ENCODE measurements at regions of chr1 and their contacts with region 1.

Region 1: DNA sequence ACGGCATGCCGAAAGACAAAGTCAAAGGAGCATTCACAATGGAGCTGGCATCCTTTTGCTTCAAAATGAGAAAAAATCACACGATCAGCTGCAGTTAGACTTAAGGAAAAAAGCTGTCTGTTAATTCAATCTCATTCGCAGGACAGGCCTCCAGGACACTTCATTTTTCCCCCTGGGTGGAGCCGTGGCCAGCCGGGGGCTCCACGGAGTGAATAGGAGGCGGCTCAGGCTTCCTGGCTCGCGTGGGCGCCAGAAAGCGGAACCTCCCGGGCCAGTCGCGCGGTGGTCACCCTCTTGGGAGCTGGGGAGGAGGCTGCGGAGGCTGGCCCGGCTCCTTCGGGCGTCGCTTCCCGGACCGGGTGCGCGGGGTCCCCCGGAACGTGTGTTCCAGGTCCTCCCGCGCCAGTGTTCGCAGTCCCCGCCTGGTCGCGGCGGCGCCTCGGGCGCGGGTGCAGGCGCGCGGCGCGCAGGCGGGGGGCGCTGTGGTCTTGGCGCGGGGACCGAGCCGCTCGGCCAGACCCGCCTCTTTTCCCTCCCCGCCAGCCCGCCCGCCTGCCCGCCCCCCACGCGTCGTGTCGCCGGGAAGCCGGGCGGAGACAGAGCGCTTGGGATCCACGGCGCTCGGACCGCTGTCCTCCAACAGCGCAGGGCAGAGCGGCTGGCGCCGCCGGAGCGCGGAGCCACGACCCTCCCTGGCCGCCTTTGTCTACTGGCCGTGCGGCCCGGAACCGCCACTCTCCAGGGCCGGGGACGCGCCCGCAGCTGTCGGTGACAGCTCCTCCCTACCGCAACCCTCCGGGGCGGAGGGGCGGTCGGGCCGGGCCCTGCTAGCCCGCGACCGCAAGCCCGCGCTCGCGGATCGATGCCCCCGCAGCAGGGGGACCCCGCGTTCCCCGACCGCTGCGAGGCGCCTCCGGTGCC is at the start of gene RHOU:
- DNase-seq: peak; percentile 80 to 89 (median 82)
- H3K4me3 ChIP-seq: peak within 1 kb of the TSS; percentile 82
- H3K27ac ChIP-seq: peak within 1 kb of the TSS; percentile 68 to 82
- H3K4me1 ChIP-seq: peaks cover 2% of the 10 kb centered on the region
- H3K27me3 ChIP-seq: no peaks in the 10 kb centered on the region
- CTCF ChIP-seq: peak; percentile 54 to 98 (median 98)
- EP300 ChIP-seq: no peak
- POLR2A ChIP-seq: peak; percentile 55
- total RNA-seq, gene RHOU: 20.5 to 131 (median 53.8) TPM

Region 2: DNA sequence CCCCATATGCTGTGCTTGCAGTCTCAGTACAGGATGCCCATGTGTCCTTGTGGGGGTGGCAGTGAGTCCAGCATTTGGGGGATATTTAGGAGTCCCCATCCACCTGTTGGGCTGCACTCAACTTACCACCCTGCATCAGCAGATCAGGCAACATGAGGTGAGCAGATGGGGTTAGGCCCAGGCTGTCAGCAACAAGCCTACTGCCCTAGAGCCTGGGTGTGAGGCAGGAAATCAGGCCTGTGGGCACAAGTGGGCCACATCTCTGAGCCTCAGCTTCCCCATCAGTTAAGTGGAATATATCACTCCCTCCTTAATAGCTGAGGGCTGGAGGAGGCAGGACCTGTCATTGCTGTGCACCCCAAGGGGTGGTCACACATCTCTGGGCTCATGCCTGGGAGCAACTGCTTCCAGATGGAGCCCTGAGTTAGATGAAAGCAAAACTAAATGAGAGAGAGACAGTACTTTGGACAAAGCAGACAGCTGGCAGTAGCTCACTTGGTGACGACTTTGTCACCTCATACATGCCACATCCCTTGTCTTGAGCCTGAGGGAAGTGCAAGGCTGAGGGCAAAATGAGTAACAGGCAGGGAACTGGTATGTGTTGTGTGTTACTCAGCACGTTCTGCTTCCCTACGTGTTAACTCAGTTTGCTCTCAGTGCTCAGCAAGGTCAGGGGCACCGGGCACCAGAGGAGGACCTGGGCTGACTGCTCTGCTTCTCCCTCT is 376.9 kb before region 1 on chr1:
- intact Hi-C with region 1: no loop called
- DNase-seq: no peak
- H3K4me3 ChIP-seq: no peak overlapping the region
- H3K27ac ChIP-seq: no peak overlapping the region
- H3K4me1 ChIP-seq: no peaks in the 10 kb centered on the region
- H3K27me3 ChIP-seq: no peaks in the 10 kb centered on the region
- CTCF ChIP-seq: no peak
- EP300 ChIP-seq: no peak
- POLR2A ChIP-seq: no peak

Region 3: DNA sequence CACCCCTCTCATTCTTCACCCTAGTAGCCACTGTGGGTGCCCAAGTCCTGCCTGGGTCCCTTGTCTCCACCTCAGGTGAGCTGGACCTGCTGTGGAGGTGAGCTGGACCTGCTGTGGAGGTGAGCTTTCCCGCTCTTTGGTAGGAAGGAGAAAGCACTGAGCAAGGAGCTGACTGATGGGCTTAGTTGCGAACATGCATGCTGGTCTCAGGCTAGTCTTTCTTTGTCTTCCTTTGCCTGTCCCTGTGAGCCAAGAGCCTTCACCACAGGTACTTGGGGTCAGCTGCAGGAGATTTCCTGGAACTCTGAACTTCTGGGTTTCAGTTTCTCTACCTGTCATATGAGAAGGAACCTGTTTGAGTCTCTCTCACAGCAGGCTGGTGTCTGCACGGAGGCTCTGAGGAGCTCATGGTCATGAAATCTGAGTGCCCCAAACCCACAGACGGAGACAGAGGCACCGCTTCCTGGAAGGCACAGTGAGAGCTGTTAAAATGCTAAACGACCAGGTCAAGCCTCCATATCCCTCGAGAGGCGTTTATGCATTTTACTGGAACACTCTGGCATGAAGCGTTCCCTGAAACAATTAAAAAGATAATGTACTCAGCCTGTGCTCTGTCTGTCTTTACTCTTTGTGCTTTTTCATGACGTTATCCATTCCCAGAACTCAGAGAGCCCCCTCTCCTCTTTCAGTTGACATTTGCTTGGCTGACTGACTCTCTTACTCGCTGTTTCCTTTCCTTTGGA is 69.7 kb after region 1 on chr1:
- intact Hi-C with region 1: loop called in 2 of 4 experiments (anchors 5 kb)
- DNase-seq: peak in 1 of 5 donors; percentile 52
- H3K4me3 ChIP-seq: no peak overlapping the region
- H3K27ac ChIP-seq: no peak overlapping the region
- H3K4me1 ChIP-seq: peaks cover 8% of the 10 kb centered on the region
- H3K27me3 ChIP-seq: no peaks in the 10 kb centered on the region
- CTCF ChIP-seq: no peak
- EP300 ChIP-seq: no peak
- POLR2A ChIP-seq: no peak

Region 4: GRCh38 chr1:228902781-228903433 is 167.8 kb after region 1 on chr1:
- intact Hi-C with region 1: loop called in 1 of 4 experiments (anchors 10 kb)
- DNase-seq: peak; percentile 88 to 93 (median 89)
- H3K4me3 ChIP-seq: no peak overlapping the region
- H3K27ac ChIP-seq: peak overlapping the region; percentile 28 to 65
- H3K4me1 ChIP-seq: peaks cover 15% of the 10 kb centered on the region
- H3K27me3 ChIP-seq: no peaks in the 10 kb centered on the region
- CTCF ChIP-seq: no peak
- EP300 ChIP-seq: no peak
- POLR2A ChIP-seq: no peak

Region 5: DNA sequence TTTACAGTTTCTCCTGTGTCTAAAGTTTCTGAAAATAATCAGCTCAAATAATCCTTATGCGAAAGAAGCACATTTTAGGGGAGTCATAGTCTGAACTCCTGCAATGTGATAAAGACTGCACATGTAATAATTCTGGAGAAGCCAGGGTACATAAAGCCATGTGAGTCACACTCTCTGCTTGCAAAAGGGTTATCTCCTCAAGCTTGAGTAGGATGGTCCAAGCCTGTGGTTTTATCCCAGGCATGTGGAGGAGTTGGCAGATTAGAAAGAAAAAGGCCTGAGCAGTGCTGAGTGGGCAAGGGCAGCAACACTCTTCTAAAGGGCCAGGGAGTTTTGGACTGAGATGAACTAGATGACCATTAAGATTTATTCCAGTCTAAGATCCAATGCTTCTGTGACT is 220.6 kb after region 1 on chr1:
- intact Hi-C with region 1: loop called in 1 of 4 experiments (anchors 5 kb)
- DNase-seq: no peak
- H3K4me3 ChIP-seq: no peak overlapping the region
- H3K27ac ChIP-seq: no peak overlapping the region
- H3K4me1 ChIP-seq: no peaks in the 10 kb centered on the region
- H3K27me3 ChIP-seq: no peaks in the 10 kb centered on the region
- CTCF ChIP-seq: no peak
- EP300 ChIP-seq: no peak
- POLR2A ChIP-seq: no peak

Region 6: GRCh38 chr1:229227298-229227919 is 492.3 kb after region 1 on chr1:
- intact Hi-C with region 1: loop called (anchors 1 to 5 kb)
- DNase-seq: peak; percentile 82 to 92 (median 88)
- H3K4me3 ChIP-seq: no peak overlapping the region
- H3K27ac ChIP-seq: no peak overlapping the region
- H3K4me1 ChIP-seq: peaks cover 10% of the 10 kb centered on the region
- H3K27me3 ChIP-seq: no peaks in the 10 kb centered on the region
- CTCF ChIP-seq: peak; percentile 79 to 87 (median 84)
- EP300 ChIP-seq: no peak
- POLR2A ChIP-seq: no peak

Region 7: GRCh38 chr1:229258031-229258756 is 523.1 kb after region 1 on chr1:
- intact Hi-C with region 1: loop called in 2 of 4 experiments (anchors 10 kb)
- DNase-seq: peak; percentile 56 to 74 (median 61)
- H3K4me3 ChIP-seq: no peak overlapping the region
- H3K27ac ChIP-seq: no peak overlapping the region
- H3K4me1 ChIP-seq: no peaks in the 10 kb centered on the region
- H3K27me3 ChIP-seq: no peaks in the 10 kb centered on the region
- CTCF ChIP-seq: peak; percentile 48 to 89 (median 82)
- EP300 ChIP-seq: no peak
- POLR2A ChIP-seq: no peak

Region 8: GRCh38 chr1:229430761-229431283 is 695.7 kb after region 1 on chr1:
- intact Hi-C with region 1: no loop called
- DNase-seq: peak in 4 of 5 donors; percentile 29 to 70 (median 48)
- H3K4me3 ChIP-seq: no peak overlapping the region
- H3K27ac ChIP-seq: no peak overlapping the region
- H3K4me1 ChIP-seq: peaks cover 15% of the 10 kb centered on the region
- H3K27me3 ChIP-seq: peaks cover 16% of the 10 kb centered on the region
- CTCF ChIP-seq: no peak
- EP300 ChIP-seq: no peak
- POLR2A ChIP-seq: no peak

Measured in ovary (tissue), 10 donors.